Dendritic cell treated with granulocyte-macrophage colony-stimulating factor and Interleukin-4, amounts not matched to agents 40 ng/mL and 50 ng/mL, for 4 days (primary cell): ENCODE measurements at regions of chr10 and their contacts with region 1.

Region 1: DNA sequence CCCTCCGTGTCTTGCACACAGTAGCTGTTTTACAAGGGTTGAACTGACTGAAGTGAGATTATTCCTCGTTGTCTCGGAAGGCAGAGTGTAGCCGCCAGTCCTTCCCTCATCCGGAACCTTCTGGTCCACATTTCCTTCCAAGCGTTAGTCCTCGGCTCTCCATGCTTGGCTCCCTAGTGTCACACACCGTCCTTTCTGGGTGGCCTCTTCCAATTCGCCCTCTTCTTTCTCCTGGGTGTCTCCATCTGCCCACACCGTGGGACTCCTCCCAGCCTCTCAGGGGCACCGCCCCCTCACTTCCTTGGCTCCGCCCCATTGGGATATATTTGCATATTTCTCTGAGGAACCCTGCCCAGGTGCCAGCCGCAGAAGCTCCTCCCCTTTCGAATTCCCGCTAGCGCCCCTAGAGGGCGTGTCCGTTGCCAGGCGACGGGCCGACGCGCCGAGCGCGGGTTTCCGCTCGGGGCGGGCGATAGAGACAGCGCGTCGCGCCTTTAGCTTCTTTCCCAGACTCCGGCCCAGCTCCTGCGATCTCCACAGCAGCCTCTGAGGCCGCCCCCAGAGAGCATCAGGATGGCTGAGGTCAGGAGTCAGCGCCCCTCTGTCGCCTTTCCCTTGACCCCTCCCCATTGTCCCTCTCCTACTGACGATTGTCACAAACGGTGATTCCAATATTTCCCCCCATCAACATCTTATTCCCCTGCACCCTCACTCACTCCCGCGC is at the start of gene CFAP58:
- H3K4me3 Mint-ChIP-seq: no peak within 1 kb of the TSS
- H3K27ac Mint-ChIP-seq: no peak within 1 kb of the TSS
- H3K4me1 Mint-ChIP-seq: peaks cover 2% of the 10 kb centered on the region
- H3K27me3 Mint-ChIP-seq: no peaks in the 10 kb centered on the region

Region 2: DNA sequence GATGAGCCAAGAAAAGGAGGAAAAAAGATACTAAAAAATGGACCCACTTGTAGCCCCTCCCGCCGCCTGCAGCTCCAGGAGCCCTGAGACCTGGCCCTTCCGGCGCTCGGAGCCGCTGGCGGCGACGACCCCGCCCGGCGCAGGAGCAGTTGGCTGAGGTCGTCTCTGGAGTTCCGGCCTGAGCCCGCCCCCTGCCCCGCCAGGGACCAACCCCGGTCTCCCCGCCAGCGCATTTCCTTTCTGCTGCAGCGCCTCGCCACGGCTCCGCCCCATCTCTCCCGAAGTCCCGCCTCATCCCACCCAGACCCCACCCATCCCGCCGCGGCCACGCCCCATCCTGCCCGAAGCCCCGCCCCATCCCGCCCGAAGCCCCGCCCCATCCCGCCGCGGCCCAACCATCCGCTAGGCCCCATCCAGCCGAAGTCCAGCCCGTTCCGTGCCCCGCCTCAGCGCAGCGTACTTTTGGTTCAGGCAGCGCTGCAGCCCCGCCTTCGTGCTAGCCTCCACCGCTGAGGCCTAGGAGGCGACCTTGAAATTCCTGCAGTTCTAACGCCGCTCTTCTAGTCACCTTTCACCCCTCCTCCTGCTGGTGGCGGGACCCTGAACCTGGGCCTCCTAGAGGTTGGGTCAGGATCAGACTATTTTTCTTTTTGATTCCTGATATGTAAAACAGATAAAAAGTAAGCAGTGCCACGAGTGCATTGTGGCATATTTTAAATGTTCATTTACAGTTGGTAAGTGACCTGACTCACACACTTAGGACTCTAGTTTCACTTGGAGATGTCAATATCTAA is 435.2 kb before region 1 on chr10 and contains the start of gene STN1:
- intact Hi-C with region 1: loop called (anchors 5 kb)
- H3K4me3 Mint-ChIP-seq: peak within 1 kb of the TSS; percentile 90
- H3K27ac Mint-ChIP-seq: peak within 1 kb of the TSS; percentile 99
- H3K4me1 Mint-ChIP-seq: peaks cover 33% of the 10 kb centered on the region
- H3K27me3 Mint-ChIP-seq: no peaks in the 10 kb centered on the region

Region 3: GRCh38 chr10:104268716-104269645 is 84.5 kb before region 1 on chr10 and contains the start of gene GSTO2:
- intact Hi-C with region 1: no loop called
- H3K4me3 Mint-ChIP-seq: peak within 1 kb of the TSS; percentile 91
- H3K27ac Mint-ChIP-seq: peak within 1 kb of the TSS; percentile 92
- H3K4me1 Mint-ChIP-seq: peaks cover 8% of the 10 kb centered on the region
- H3K27me3 Mint-ChIP-seq: no peaks in the 10 kb centered on the region

Region 4: GRCh38 chr10:104291439-104291951 is 62.0 kb before region 1 on chr10:
- intact Hi-C with region 1: loop called (anchors 1 kb)
- H3K4me3 Mint-ChIP-seq: no peak overlapping the region
- H3K27ac Mint-ChIP-seq: no peak overlapping the region
- H3K4me1 Mint-ChIP-seq: peaks cover 26% of the 10 kb centered on the region
- H3K27me3 Mint-ChIP-seq: peaks cover 8% of the 10 kb centered on the region

Region 5: GRCh38 chr10:104304962-104305361 is 48.5 kb before region 1 on chr10:
- intact Hi-C with region 1: loop called (anchors 1 kb)
- H3K4me3 Mint-ChIP-seq: no peak overlapping the region
- H3K27ac Mint-ChIP-seq: no peak overlapping the region
- H3K4me1 Mint-ChIP-seq: peaks cover 30% of the 10 kb centered on the region
- H3K27me3 Mint-ChIP-seq: peaks cover 4% of the 10 kb centered on the region

Region 6: GRCh38 chr10:104387130-104387888 is 33.8 kb after region 1 on chr10:
- intact Hi-C with region 1: no loop called
- H3K4me3 Mint-ChIP-seq: no peak overlapping the region
- H3K27ac Mint-ChIP-seq: no peak overlapping the region
- H3K4me1 Mint-ChIP-seq: peaks cover 11% of the 10 kb centered on the region
- H3K27me3 Mint-ChIP-seq: peaks cover 11% of the 10 kb centered on the region

Region 7: DNA sequence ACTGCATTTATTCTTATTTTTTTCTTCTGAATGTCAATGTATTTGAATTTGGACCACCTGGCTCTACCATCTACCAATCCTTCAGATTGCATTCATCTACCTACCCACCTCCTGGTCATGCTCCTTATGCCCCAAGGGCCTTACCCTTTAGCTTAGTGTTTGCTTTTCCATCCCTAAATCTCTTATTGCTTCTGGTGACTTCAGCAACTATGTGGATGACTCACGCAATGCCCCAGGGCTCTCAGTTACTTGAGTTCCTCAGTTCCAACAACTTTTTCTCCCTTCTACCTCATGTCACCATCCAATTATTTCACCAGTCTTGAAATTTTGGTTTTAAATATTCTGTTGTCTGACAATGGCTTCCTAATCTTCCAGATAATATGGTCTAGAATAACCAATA is 119.0 kb after region 1 on chr10:
- intact Hi-C with region 1: no loop called
- H3K4me3 Mint-ChIP-seq: no peak overlapping the region
- H3K27ac Mint-ChIP-seq: no peak overlapping the region
- H3K4me1 Mint-ChIP-seq: no peaks in the 10 kb centered on the region
- H3K27me3 Mint-ChIP-seq: no peaks in the 10 kb centered on the region